OCI-LY7 (cell line): ENCODE measurements at regions of chr10 and their contacts with region 1.

Region 1: DNA sequence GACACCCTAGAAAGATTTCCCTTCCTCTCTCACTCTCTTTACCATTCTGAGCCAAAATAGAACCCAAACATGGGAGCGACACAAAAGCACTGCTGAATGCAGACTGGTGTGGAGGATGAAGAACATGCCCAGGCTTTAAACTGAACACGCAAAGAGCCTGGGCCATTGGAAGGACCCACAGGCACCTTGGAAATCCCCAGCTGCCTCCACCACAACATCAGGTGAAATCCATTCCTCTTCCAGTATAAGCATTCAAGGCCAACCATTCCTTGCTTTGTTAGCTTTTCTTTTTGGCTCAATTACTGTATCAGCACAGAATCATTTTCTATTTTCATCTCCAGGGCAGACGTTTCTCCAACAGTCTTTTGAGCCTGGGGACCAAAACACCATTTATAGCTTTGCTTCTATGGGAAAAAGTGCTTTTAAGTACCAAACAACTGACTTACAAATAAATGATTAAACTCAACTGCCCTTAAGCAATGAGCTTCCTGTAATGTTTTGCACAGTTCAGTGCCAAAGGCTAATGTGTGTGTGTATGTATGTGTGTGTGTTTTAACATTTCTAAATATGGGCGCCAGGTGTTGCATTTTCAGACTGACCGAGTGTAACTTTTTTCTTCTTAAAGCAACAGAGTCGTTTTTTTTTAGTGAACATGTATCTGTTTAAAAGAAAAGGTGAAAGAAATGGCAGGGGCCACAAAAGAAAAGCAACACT is 16.2 kb upstream of the BLNK start:
- DNase-seq: peak; percentile 96
- H3K4me3 ChIP-seq: peak overlapping the region; percentile 63
- H3K27ac ChIP-seq: peak overlapping the region; percentile 98
- H3K4me1 ChIP-seq: peaks cover 90% of the 10 kb centered on the region
- CTCF ChIP-seq: no peak

Region 2: DNA sequence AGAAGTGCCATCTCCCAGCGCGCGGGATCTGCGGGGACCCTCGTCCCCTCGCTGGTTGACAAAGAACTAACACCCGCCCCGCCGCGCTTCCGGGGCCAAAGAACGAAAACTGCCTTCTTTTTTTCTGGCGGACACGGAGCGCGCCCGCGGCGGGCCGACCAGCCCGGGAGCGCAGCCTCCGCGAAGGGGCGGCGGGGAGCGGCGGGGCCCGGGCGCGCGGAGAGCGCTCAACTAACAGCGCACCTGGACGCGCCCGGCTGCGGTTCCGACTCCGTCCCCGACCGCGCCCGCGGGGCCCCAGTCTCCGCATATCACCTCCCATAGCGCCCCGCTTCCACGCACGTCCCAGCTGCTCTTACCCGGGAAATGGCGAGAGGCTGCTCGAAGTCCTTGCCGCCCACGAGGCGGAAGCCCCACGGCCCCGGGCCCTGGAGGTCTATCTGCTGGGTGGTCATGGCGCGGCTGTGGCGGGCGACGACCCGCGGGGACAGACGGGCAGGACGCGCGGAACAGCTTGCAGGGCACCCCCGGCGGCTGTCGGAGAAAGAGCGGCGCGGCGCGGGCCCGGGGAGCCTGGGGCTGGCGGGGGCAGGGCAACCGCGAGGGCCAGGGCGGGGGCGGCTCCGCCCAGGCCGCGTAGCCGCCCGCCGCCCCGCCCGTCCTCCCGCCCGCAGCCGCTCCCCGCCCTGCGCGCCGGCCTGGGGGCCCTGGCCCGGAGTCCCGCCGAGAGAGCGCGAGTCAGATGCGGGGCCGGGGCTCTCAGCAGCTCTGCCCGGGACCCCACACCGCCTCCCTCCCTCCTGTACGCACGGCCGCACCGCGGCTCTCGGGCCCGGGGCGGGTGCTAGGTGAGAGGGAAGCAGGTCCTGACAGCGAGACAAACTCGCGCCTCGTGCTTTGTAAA is 996.8 kb before region 1 on chr10 and contains the start of gene PDLIM1:
- CTCF ChIA-PET with region 1: no interaction called
- POLR2A ChIA-PET with region 1: no interaction called
- intact Hi-C with region 1: loop called (anchors 10 kb)
- DNase-seq: peak; percentile 71
- H3K4me3 ChIP-seq: peak within 1 kb of the TSS; percentile 71
- H3K27ac ChIP-seq: no peak within 1 kb of the TSS
- H3K4me1 ChIP-seq: peaks cover 63% of the 10 kb centered on the region
- CTCF ChIP-seq: 0 out of 2 replicates have a peak, but pooled peaks have one; percentile 28
- total RNA-seq, gene PDLIM1: 22.3 and 23.1 TPM in 2 replicates

Region 3: DNA sequence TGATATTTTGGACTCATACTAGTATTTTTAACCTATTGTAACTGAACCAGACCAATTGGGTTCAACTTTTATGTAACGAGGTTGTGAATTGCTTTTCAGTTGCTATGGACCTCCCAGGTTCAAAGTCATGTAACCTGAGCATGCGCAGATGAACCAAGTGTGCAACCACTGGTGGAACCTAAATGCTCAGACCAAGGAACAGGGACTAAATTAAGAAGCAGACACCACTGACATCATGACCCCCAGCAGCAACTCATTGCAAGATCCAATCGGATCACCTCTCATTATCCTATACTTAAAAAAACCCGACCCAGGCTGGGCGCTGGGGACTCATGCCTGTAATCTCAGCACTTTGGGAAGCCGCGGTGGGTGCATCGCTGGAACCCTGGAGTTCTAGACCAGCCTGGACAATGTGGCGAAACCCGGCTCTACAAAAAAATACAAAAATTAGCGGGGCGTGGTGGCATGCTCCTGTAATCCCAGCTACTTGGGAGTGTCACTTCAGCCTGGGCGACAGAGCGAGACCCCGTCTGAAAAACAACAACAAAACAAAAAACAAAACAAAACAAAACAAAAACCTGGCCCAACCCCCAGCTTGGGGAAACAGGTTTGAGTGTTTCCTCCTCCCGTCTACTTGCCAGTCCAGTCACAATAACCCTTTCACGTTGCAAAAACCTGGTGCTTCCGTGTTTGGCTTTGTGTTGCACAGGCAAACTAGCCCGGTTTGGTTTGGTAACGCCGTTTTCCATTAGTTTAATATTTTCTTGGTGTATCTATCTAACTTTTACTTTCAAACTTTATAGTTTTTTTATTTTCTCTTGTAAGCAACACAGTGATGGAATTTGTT is 168.7 kb before region 1 on chr10:
- CTCF ChIA-PET with region 1: no interaction called
- POLR2A ChIA-PET with region 1: no interaction called
- intact Hi-C with region 1: no loop called
- DNase-seq: no peak
- H3K4me3 ChIP-seq: no peak overlapping the region
- H3K27ac ChIP-seq: no peak overlapping the region
- H3K4me1 ChIP-seq: no peaks in the 10 kb centered on the region
- CTCF ChIP-seq: no peak

Region 4: DNA sequence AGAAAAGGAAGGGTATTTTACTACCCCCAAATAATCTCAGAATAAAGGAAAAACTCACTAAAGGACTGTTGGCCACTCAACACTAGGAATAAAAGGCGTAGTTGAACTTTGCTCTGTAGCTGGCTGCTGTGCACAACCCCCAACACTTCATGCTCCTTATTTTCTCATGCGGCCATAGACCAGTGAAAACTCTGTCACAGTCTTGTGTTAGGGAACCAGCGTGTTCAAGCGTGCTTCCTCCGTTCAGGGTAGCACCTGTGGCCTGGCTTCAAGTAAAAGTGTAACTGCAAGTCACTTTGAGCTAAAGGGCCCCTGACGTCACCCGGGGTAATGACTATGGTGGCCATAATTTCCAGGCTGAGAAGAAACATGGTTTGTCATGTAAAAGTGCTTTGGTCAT is 43.2 kb before region 1 on chr10:
- CTCF ChIA-PET with region 1: interaction called, 5 read pairs
- POLR2A ChIA-PET with region 1: interaction called, 8 read pairs
- intact Hi-C with region 1: loop called (anchors 1 kb)
- DNase-seq: peak; percentile 97
- H3K4me3 ChIP-seq: peak overlapping the region; percentile 52
- H3K27ac ChIP-seq: peak overlapping the region; percentile 93
- H3K4me1 ChIP-seq: peaks cover 50% of the 10 kb centered on the region
- CTCF ChIP-seq: no peak

Region 5: GRCh38 chr10:96299383-96299782 is 11.8 kb after region 1 on chr10:
- CTCF ChIA-PET with region 1: no interaction called
- POLR2A ChIA-PET with region 1: interaction called, 36 read pairs
- intact Hi-C with region 1: no loop called
- DNase-seq: peak; percentile 62
- H3K4me3 ChIP-seq: peak overlapping the region; percentile 45
- H3K27ac ChIP-seq: peak overlapping the region; percentile 68
- H3K4me1 ChIP-seq: peaks cover 70% of the 10 kb centered on the region
- CTCF ChIP-seq: no peak

Region 6: DNA sequence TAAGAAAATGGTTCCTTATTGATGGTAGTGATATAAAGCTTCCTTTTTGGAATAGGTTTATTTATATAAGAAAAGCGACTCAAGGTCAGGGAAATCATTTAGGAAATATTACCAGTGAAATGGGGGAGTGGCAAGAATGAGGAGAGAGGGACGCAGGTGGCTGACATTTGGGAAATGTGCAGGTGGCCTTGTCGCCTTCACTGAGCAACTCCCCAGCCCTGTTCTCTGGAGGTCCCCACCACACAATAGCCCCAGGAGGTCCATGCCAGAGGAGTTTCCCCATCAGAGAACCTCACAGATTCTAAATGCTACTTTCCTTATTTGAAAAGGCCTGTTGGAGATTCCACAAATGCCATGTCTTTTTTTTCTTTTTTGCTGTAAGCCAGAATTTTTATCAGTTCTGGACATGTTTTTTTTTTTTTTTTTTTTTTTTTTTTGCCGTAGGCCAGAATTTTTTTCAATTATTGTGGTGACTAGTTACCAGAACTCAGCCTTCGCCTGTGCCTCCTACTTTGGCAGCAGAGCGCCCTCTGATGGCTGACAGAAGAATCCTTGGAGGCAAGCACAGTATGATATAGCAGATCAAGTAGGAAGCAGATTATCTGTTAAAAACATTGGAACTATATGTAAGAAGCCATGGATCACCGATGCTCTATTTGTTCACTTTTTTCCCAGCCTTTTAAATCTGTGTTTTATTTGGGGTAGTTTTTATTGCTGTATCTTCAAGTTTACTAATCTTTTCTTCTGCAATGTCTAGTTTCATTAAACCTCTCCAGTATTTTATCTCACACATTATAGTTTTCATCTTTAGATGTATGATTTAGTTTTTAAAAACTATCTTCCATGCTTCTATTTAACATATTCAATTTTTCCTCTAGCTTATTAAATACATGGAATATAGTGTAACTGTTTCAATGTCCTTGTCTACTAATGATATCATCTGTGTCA is 52.7 kb after region 1 on chr10:
- CTCF ChIA-PET with region 1: no interaction called
- POLR2A ChIA-PET with region 1: no interaction called
- intact Hi-C with region 1: no loop called
- DNase-seq: peak; percentile 88
- H3K4me3 ChIP-seq: no peak overlapping the region
- H3K27ac ChIP-seq: no peak overlapping the region
- H3K4me1 ChIP-seq: peaks cover 13% of the 10 kb centered on the region
- CTCF ChIP-seq: peak; percentile 99